A549 (cell line): ENCODE measurements at regions of chr2 and their contacts with region 1.

Region 1: GRCh38 chr2:133844214-133844892 is 276.1 kb upstream of the NCKAP5 start:
- DNase-seq: peak; percentile 62 to 64
- ATAC-seq: peak; percentile 85 to 93
- H3K4me3 ChIP-seq: no peak overlapping the region
- H3K27ac ChIP-seq: peak overlapping the region; percentile 36 to 78; a peak in 5 of 6 replicates
- H3K4me1 ChIP-seq: peaks cover 18% of the 10 kb centered on the region; the same call in 1 of the 3 replicates
- CTCF ChIP-seq: peak; percentile 90
- EP300 ChIP-seq: no peak
- POLR2A ChIP-seq: no peak
- RAD21 ChIP-seq: peak; percentile 95 to 98

Region 2: GRCh38 chr2:132651115-132652045 is 1193.0 kb before region 1 on chr2:
- CTCF ChIA-PET with region 1: interaction called, 12 read pairs
- POLR2A ChIA-PET with region 1: no interaction called
- DNase-seq: peak; percentile 45 to 63
- ATAC-seq: peak; percentile 92 to 96; a peak in 5 of 6 replicates
- H3K4me3 ChIP-seq: no peak overlapping the region
- H3K27ac ChIP-seq: no peak overlapping the region
- H3K4me1 ChIP-seq: no peaks in the 10 kb centered on the region
- CTCF ChIP-seq: peak; percentile 56
- EP300 ChIP-seq: no peak
- POLR2A ChIP-seq: no peak
- RAD21 ChIP-seq: peak; percentile 52 to 61

Region 3: DNA sequence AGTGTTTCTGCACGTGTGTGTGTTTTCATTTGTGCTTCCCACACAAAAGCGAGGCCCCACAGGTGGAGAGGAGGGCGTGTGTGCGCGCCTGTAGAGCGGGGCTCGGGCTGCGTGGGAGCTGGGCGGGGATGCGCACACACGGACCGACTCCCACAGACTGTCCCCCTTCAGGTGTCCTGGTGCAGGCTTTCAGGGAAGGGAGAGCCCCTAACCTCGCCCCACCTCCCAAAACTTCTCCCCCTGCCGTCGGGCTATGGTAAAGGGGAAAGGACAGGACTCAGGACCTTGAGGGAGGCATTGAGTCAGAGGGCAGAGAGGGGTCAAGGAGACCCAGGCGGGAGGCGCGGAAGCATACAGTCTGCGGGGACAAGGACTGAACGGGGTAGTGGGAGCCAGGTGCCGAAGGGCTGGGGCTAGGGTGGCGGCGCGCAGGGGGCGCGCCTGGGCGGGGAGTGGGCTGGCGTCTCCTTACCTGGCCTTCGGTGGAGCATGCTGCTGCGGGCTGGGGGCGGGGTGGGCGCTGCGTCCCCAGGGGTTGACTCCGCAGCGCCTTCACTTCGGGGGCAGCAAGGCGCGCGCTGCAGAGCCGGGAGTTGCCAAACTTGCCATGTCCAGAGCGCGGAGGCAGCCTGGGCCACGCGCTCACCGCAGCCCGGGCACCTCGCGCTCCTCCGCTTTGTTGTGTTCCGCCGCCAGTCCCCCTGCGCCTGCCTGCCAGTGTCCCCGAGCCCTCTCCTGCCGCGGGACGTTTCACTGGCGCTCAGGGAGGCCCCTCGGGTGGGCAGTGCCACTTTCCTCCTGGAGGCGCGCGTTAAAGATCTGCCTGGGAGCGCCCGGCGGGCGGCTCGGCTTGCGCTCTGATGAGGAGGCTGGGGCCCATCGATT is 578.1 kb before region 1 on chr2:
- CTCF ChIA-PET with region 1: interaction called, 48 read pairs
- POLR2A ChIA-PET with region 1: no interaction called
- DNase-seq: peak; percentile 49 to 64
- ATAC-seq: peak; percentile 80 to 82
- H3K4me3 ChIP-seq: peak overlapping the region; percentile 74
- H3K27ac ChIP-seq: peak overlapping the region; percentile 89 to 98
- H3K4me1 ChIP-seq: peaks cover 53% of the 10 kb centered on the region
- CTCF ChIP-seq: peak; percentile 21; the same call in 2 of the 3 replicates
- EP300 ChIP-seq: no peak
- POLR2A ChIP-seq: no peak
- RAD21 ChIP-seq: peak; percentile 7 to 11; a peak in 1 of 5 replicates

Region 4: GRCh38 chr2:133568172-133568571 is 276.2 kb before region 1 on chr2 and contains the start of gene NCKAP5:
- CTCF ChIA-PET with region 1: interaction called, 20 read pairs
- POLR2A ChIA-PET with region 1: no interaction called
- DNase-seq: peak; percentile 38 to 42
- ATAC-seq: peak; percentile 79 to 84; a peak in 5 of 6 replicates
- H3K4me3 ChIP-seq: peak within 1 kb of the TSS; percentile 35
- H3K27ac ChIP-seq: peak within 1 kb of the TSS; percentile 26 to 75
- H3K4me1 ChIP-seq: peaks cover 31% of the 10 kb centered on the region
- CTCF ChIP-seq: no peak
- EP300 ChIP-seq: no peak
- POLR2A ChIP-seq: no peak
- RAD21 ChIP-seq: no peak
- polyA plus RNA-seq, gene NCKAP5: 2.9 and 3.0 TPM in 2 replicates

Region 5: GRCh38 chr2:133780099-133780839 is 64.1 kb before region 1 on chr2:
- CTCF ChIA-PET with region 1: interaction called, 13 read pairs
- POLR2A ChIA-PET with region 1: no interaction called
- DNase-seq: peak; percentile 28 to 77
- ATAC-seq: peak; percentile 64 to 90; a peak in 5 of 6 replicates
- H3K4me3 ChIP-seq: no peak overlapping the region
- H3K27ac ChIP-seq: peak overlapping the region in 1 of 2 experiments; percentile 68; a peak in 4 of 6 replicates
- H3K4me1 ChIP-seq: peaks cover 13% of the 10 kb centered on the region; the same call in 2 of the 3 replicates
- CTCF ChIP-seq: peak; percentile 80
- EP300 ChIP-seq: no peak
- POLR2A ChIP-seq: no peak
- RAD21 ChIP-seq: peak; percentile 84

Region 6: DNA sequence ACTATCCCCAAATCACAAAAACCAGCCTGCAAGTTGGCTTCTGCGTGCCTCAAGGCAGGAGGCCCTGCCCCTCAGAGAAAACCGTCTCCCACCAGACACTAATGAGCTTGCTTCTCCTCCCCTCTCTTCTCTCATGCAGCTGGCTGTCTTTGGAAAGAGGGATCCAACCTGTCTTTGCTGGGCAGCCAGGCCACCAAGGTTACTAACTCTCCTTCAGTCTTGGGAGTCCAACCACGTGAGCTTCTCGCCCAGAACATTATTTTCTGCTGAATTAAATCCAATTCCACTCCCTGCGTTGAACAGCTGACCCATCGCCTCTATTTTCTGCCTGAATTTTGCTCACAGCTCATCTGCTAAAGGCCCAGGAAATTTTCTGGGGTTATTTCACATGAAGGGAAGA is 15.2 kb after region 1 on chr2:
- CTCF ChIA-PET with region 1: interaction called, 12 read pairs
- POLR2A ChIA-PET with region 1: no interaction called
- DNase-seq: no peak
- ATAC-seq: no peak
- H3K4me3 ChIP-seq: no peak overlapping the region
- H3K27ac ChIP-seq: no peak overlapping the region
- H3K4me1 ChIP-seq: no peaks in the 10 kb centered on the region
- CTCF ChIP-seq: no peak
- EP300 ChIP-seq: no peak
- POLR2A ChIP-seq: no peak
- RAD21 ChIP-seq: no peak

Region 7: GRCh38 chr2:134087371-134087921 is 243.1 kb after region 1 on chr2:
- CTCF ChIA-PET with region 1: no interaction called
- POLR2A ChIA-PET with region 1: no interaction called
- DNase-seq: no peak
- ATAC-seq: peak in 1 of 2 experiments; percentile 44; a peak in 1 of 6 replicates
- H3K4me3 ChIP-seq: no peak overlapping the region
- H3K27ac ChIP-seq: no peak overlapping the region
- H3K4me1 ChIP-seq: peaks cover under 1% of the 10 kb centered on the region; the same call in 1 of the 3 replicates
- CTCF ChIP-seq: no peak
- EP300 ChIP-seq: no peak
- POLR2A ChIP-seq: no peak
- RAD21 ChIP-seq: no peak